Activated naive CD4-positive, alpha-beta T cell treated with anti-CD3 and anti-CD28 coated beads for 36 hours (primary cell): ENCODE measurements at regions of chr7 and their contacts with region 1.

Region 1: DNA sequence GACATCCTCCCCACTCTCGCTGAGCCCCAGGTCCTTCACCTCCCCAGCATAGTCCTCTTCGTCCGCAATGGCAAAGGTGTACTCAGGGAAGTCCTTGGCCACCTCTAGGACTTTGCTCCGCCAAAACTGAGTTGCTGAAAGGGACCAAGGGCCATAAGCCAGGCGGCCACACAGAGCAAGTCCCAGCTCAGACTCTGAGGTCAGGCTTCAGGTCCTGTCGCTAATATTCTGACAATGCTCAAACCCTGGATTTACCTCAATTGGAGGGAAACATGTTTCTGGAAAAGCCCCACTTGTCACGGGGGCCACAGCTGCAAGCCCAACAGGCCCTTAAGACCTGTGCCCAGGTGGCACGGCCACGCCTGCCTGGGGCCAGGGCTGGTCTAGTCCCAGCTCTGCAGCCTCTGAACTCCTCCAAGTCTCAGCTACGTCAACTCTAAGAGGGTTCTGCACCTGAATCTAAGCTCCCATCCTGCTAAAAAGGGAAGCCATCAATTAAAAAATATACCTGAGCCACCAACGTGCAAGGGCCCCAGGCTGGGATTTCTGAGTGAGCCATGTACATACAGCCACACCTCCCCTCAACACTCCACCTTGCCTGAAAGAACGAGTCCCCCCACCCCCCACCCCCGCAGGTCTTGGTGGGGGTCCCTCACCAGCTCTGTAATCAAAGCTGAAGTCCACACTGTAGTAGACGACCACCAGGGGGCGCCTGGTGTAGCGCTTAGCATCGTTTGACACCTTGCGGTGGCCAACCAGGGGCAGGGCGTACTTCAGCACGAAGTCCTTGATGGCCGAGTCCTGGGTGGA is 22.9 kb downstream of the PDIA4 start:
- DNase-seq: peak; percentile 88
- H3K4me3 Mint-ChIP-seq: no peak overlapping the region
- H3K27ac Mint-ChIP-seq: no peak overlapping the region
- H3K4me1 Mint-ChIP-seq: peaks cover 3% of the 10 kb centered on the region
- H3K27me3 Mint-ChIP-seq: no peaks in the 10 kb centered on the region

Region 2: GRCh38 chr7:149021725-149022062 is 16.2 kb after region 1 on chr7:
- CTCF ChIA-PET with region 1: interaction called, 59 read pairs
- intact Hi-C with region 1: no loop called
- DNase-seq: no peak
- H3K4me3 Mint-ChIP-seq: no peak overlapping the region
- H3K27ac Mint-ChIP-seq: peak overlapping the region; percentile 1
- H3K4me1 Mint-ChIP-seq: peaks cover 38% of the 10 kb centered on the region
- H3K27me3 Mint-ChIP-seq: no peaks in the 10 kb centered on the region

Region 3: GRCh38 chr7:149071641-149072437 is 66.4 kb after region 1 on chr7:
- CTCF ChIA-PET with region 1: interaction called, 21 read pairs
- intact Hi-C with region 1: no loop called
- DNase-seq: peak; percentile 33
- H3K4me3 Mint-ChIP-seq: peak overlapping the region; percentile 26
- H3K27ac Mint-ChIP-seq: no peak overlapping the region
- H3K4me1 Mint-ChIP-seq: peaks cover 8% of the 10 kb centered on the region
- H3K27me3 Mint-ChIP-seq: no peaks in the 10 kb centered on the region